Spleen (tissue), 13 donors: ENCODE measurements at regions of chr3 and their contacts with region 1.

Region 1: GRCh38 chr3:195204360-195205163 is 66.4 kb downstream of the XXYLT1 start:
- DNase-seq: no peak
- H3K4me3 ChIP-seq: no peak overlapping the region
- H3K27ac ChIP-seq: peak overlapping the region in 7 of 8 donors; percentile 41 to 75 (median 69)
- H3K4me1 ChIP-seq: peaks cover 2 to 62% (median 34%) of the 10 kb centered on the region in 6 donors
- H3K27me3 ChIP-seq: no peaks in the 10 kb centered on the region
- CTCF ChIP-seq: no peak
- POLR2A ChIP-seq: no peak

Region 2: DNA sequence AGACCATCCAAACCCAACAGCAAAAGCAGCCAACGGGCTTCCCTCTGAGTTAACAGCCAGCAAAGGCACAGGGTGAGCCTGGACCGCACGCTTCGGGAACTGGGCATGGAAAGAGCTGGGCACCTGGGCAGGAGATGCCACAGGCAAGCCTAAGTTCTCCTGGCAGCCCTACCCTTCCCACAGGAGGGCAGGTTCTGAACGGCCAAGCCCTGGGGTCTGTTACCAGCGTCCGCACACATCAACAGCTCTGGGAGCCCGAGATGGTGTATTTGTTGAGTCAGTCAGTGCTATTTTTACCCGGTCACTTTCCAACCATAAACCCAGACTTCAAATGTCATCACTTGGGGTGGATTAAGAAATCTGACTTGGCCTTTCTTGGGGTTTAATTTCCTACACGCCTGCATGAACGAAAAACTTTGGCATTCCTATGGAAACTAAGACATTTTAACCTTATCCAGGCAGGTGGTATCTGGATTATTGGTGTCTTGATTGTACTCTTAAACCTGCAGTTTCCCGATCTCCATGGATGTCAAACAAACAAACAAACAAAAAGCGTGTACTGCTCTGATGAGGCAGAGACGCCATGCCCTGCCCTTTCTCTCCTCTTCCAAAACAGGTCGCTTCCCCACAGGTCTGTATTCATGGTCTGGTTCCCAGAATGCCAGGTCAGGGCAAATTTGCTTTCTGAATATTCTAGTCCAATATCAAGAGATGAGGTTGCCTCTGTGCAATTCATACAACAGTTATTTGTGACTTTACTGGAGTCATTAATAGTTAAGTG is 33.3 kb before region 1 on chr3:
- intact Hi-C with region 1: loop called (anchors 2 kb)
- DNase-seq: no peak
- H3K4me3 ChIP-seq: no peak overlapping the region
- H3K27ac ChIP-seq: no peak overlapping the region
- H3K4me1 ChIP-seq: peaks cover 0 to 37% (median 9%) of the 10 kb centered on the region in 6 donors
- H3K27me3 ChIP-seq: no peaks in the 10 kb centered on the region
- CTCF ChIP-seq: no peak
- POLR2A ChIP-seq: no peak